Activated naive CD4-positive, alpha-beta T cell treated with anti-CD3 and anti-CD28 coated beads for 36 hours (primary cell): ENCODE measurements at regions of chr2 and their contacts with region 1.

Region 1: DNA sequence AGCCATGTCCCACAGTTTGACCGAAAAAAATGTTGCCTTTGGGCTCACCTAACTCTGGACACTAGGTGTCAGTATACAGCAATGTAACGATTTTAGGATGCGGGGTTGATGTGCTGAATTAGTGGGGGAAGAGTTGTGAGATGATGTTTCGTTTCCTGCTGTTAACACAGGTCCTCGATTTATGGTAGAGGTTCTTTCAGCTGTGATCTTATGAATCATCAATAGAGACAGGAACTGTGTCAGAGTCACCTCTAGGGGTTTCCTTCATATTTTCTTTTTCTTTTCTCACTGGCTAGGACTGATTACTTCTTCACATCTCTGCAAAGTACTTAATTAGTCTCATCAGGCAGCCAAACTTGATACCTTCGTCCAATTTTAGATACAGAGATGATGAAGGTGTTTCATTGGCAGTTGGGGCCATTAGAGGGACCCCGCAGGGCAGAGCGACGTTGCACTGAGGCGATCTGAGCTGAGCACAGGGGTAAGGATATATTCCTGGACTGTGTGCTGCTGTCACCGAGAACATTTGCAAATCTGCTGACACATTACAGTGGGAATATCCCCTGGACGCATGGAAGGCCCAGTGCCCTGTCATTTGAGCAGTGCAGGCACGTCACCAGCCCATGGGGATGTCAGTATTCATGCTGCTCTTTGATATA is 10.2 kb upstream of the MMADHC start:
- DNase-seq: peak; percentile 67
- H3K4me3 Mint-ChIP-seq: no peak overlapping the region
- H3K27ac Mint-ChIP-seq: no peak overlapping the region
- H3K4me1 Mint-ChIP-seq: peaks cover 17% of the 10 kb centered on the region
- H3K27me3 Mint-ChIP-seq: peaks cover 2% of the 10 kb centered on the region

Region 2: GRCh38 chr2:149715005-149715592 is 117.3 kb after region 1 on chr2:
- CTCF ChIA-PET with region 1: no interaction called
- intact Hi-C with region 1: loop called (anchors 1 kb)
- DNase-seq: no peak
- H3K4me3 Mint-ChIP-seq: no peak overlapping the region
- H3K27ac Mint-ChIP-seq: no peak overlapping the region
- H3K4me1 Mint-ChIP-seq: no peaks in the 10 kb centered on the region
- H3K27me3 Mint-ChIP-seq: peaks cover 2% of the 10 kb centered on the region

Region 3: GRCh38 chr2:150487537-150488429 is 890.0 kb after region 1 on chr2 and contains the start of gene RND3:
- CTCF ChIA-PET with region 1: no interaction called
- intact Hi-C with region 1: loop called (anchors 1 kb)
- DNase-seq: peak; percentile 77
- H3K4me3 Mint-ChIP-seq: peak within 1 kb of the TSS; percentile 26
- H3K27ac Mint-ChIP-seq: no peak within 1 kb of the TSS
- H3K4me1 Mint-ChIP-seq: peaks cover 12% of the 10 kb centered on the region
- H3K27me3 Mint-ChIP-seq: peaks cover 66% of the 10 kb centered on the region
- total RNA-seq, gene RND3: not detected

Region 4: DNA sequence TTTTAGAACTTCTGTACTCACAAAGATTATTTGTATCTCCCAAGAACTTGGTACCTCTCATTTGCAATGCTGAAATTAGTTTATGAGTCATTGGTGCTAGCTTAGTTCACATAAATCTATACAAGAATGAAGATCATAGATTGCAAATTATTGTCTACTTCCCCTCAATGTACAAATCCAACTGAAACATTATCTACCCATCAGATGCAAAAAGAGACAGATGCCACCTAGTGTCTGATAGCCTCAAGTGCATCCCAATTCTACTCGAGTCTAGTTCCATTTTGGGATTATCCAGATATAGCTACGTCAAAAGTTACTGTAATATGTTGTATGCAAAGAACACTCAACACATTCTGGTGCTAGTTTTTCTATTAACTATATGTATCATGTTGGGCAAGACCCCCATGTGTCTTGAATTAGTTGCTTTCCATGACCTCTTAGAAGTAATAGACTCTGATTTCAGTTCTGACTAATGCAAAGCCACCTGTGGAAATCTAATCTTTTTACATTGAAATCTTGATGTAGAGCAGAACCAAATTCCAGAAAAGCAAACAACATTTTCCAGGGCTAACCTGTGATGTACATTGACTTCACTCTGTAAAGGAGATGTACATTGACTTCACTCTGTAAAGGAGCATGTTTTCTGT is 1453.9 kb after region 1 on chr2:
- CTCF ChIA-PET with region 1: interaction called, 3 read pairs
- intact Hi-C with region 1: loop called (anchors 1 kb)
- DNase-seq: peak; percentile 57
- H3K4me3 Mint-ChIP-seq: no peak overlapping the region
- H3K27ac Mint-ChIP-seq: no peak overlapping the region
- H3K4me1 Mint-ChIP-seq: no peaks in the 10 kb centered on the region
- H3K27me3 Mint-ChIP-seq: peaks cover 4% of the 10 kb centered on the region

Region 5: GRCh38 chr2:151437630-151438029 is 1839.8 kb after region 1 on chr2:
- CTCF ChIA-PET with region 1: no interaction called
- intact Hi-C with region 1: loop called (anchors 5 kb)
- DNase-seq: no peak
- H3K4me3 Mint-ChIP-seq: no peak overlapping the region
- H3K27ac Mint-ChIP-seq: no peak overlapping the region
- H3K4me1 Mint-ChIP-seq: peaks cover 2% of the 10 kb centered on the region
- H3K27me3 Mint-ChIP-seq: no peaks in the 10 kb centered on the region